ENCODE measurements at regions of chr17 and their contacts with region 1.

Region 1: DNA sequence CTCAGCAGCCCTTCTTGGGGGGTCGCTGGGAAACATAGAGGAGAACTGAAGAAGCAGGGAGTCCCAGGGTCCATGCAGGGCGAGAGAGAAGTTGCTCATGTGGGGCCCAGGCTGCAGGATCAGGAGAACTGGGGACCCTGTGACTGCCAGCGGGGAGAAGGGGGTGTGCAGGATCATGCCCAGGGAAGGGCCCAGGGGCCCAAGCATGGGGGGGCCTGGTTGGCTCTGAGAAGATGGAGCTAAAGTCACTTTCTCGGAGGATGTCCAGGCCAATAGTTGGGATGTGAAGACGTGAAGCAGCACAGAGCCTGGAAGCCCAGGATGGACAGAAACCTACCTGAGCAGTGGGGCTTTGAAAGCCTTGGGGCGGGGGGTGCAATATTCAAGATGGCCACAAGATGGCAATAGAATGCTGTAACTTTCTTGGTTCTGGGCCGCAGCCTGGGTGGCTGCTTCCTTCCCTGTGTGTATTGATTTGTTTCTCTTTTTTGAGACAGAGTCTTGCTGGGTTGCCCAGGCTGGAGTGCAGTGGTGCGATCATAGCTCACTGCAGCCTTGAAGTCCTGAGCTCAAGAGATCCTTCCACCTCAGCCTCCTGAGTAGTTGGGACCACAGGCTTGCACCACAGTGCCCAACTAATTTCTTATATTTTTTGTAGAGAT is 3.4 kb downstream of the STH start:
- DNase-seq: peak in 8 of 10 donors; percentile 51 to 93 (median 74)

Region 2: GRCh38 chr17:45828628-45829027 is 173.8 kb before region 1 on chr17:
- intact Hi-C with region 1: no loop called
- DNase-seq: peak in 4 of 10 donors; percentile 11 to 81 (median 34)

Region 3: DNA sequence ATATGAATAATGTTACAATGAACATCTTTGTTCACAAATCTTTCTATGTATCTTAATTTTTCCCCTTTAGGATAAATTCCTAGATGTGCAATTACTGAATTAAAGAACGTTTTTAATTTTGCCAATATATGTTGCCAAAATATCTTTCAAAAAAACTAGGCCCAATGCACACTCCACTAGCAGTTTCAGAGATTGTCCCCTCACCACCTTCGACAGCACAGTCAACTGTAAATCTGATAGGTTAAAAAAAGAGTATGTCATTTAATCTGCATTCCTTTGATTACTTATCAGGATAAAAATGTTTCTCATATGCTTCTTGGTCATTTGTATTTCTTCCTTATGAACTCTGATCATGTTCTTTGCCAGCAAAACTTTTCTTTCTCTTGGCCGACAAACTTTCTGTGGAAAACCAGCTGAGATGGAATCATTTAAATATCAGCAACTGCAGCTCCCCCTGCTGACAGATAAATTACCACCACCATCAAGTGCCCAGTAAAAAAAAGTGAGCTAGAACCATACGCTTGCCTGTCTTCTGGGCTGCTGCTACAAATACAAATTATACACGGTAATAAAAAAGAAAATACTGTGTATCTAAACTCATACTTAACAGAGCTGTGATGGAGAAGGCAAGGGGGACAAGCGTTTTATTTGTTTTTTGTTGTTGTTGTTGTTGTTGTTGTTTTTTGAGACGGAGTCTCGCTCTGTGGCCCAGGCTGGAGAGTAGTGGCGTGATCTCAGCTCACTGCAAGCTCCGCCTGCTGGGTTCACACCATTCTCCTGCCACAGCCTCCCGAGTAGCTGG is 210.4 kb after region 1 on chr17:
- intact Hi-C with region 1: loop called (anchors 1 kb)
- DNase-seq: peak in 5 of 10 donors; percentile 27 to 63 (median 42)

Measured in posterior cingulate gyrus (tissue), 11 donors.